Activated T-helper 2 cell treated with anti-CD3 and anti-CD28 coated beads, Interferon-gamma antibody, Interleukin-2, Interleukin-4, amounts not matched to agents 10 μg/mL and 5 μg/mL and 100 μg/mL, durations not matched to agents 14 hours and 24 hours and 36 hours (primary cell): ENCODE measurements at regions of chr20 and their contacts with region 1.

Region 1: GRCh38 chr20:37384683-37385174 is 38.8 kb downstream of the SRC start:
- DNase-seq: peak; percentile 72
- H3K4me3 Mint-ChIP-seq: peak overlapping the region; percentile 79
- H3K27ac Mint-ChIP-seq: no peak overlapping the region
- H3K4me1 Mint-ChIP-seq: peaks cover 5% of the 10 kb centered on the region
- H3K27me3 Mint-ChIP-seq: peaks cover 3% of the 10 kb centered on the region

Region 2: DNA sequence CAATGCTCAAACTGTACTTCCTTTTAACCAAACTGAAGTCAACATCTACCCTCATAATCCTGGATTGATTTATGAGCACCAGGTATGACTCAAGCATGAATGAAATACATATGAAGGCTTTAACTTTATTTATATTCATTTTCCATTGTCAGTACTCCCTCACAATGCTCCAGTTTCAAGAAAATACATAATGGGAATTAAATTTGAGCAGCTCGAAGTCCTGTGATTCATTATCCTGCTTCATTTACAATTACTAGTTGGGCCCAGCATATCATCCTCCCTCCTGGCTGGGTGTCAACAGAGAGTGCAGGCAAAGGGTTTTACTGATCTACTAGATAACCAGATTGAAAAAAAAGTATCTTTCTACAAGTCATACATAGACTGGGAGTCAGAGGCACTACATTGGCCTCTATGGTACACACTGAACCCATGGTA is 443.3 kb before region 1 on chr20:
- intact Hi-C with region 1: no loop called
- DNase-seq: no peak
- H3K4me3 Mint-ChIP-seq: no peak overlapping the region
- H3K27ac Mint-ChIP-seq: peak overlapping the region; percentile 88
- H3K4me1 Mint-ChIP-seq: peaks cover 46% of the 10 kb centered on the region
- H3K27me3 Mint-ChIP-seq: no peaks in the 10 kb centered on the region

Region 3: GRCh38 chr20:36988494-36988966 is 396.2 kb before region 1 on chr20:
- intact Hi-C with region 1: no loop called
- DNase-seq: no peak
- H3K4me3 Mint-ChIP-seq: no peak overlapping the region
- H3K27ac Mint-ChIP-seq: no peak overlapping the region
- H3K4me1 Mint-ChIP-seq: peaks cover 11% of the 10 kb centered on the region
- H3K27me3 Mint-ChIP-seq: no peaks in the 10 kb centered on the region

Region 4: DNA sequence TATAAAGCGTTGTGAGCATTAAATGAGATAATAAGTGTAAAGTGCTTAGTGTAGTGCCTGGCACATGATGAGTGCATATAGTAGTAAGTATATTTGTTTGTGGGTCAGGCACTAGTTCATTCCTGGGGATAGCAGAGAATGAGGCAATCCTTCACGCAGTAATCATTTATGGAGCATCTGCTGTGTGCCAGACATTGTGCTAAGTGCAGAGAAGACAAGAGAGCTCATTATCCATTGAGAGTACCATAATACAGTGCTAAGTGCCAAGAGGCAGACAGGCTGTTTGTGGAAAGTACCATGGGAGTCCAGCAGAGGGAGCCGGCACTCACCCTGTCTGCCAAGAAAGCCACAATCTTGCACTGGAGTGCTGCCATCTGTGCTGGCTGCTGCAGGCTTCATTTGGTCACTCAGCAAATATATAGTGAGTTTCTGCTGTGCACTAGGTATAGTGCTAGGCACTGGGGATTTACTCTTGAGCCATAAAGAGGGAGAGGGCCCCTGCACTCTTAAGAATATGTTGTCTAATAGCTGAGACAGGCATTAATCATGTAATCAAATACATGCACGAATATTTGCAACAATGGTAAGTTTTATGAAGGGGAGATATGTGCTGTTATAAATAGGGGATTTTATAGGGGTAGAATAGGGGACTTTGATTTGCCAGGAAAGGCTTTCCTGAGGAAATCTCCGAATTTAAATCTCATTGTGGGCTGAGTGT is 192.4 kb before region 1 on chr20:
- intact Hi-C with region 1: loop called (anchors 10 kb)
- DNase-seq: peak; percentile 61
- H3K4me3 Mint-ChIP-seq: no peak overlapping the region
- H3K27ac Mint-ChIP-seq: peak overlapping the region; percentile 57
- H3K4me1 Mint-ChIP-seq: peaks cover 59% of the 10 kb centered on the region
- H3K27me3 Mint-ChIP-seq: no peaks in the 10 kb centered on the region

Region 5: GRCh38 chr20:37270576-37271420 is 113.9 kb before region 1 on chr20:
- intact Hi-C with region 1: loop called (anchors 1 kb)
- DNase-seq: no peak
- H3K4me3 Mint-ChIP-seq: no peak overlapping the region
- H3K27ac Mint-ChIP-seq: no peak overlapping the region
- H3K4me1 Mint-ChIP-seq: no peaks in the 10 kb centered on the region
- H3K27me3 Mint-ChIP-seq: peaks cover 6% of the 10 kb centered on the region

Region 6: GRCh38 chr20:37288091-37288490 is 96.6 kb before region 1 on chr20:
- intact Hi-C with region 1: loop called (anchors 5 kb)
- DNase-seq: no peak
- H3K4me3 Mint-ChIP-seq: peak overlapping the region; percentile 53
- H3K27ac Mint-ChIP-seq: peak overlapping the region; percentile 51
- H3K4me1 Mint-ChIP-seq: peaks cover 15% of the 10 kb centered on the region
- H3K27me3 Mint-ChIP-seq: peaks cover 9% of the 10 kb centered on the region

Region 7: GRCh38 chr20:37463726-37464494 is 79.2 kb after region 1 on chr20:
- intact Hi-C with region 1: no loop called
- DNase-seq: no peak
- H3K4me3 Mint-ChIP-seq: no peak overlapping the region
- H3K27ac Mint-ChIP-seq: no peak overlapping the region
- H3K4me1 Mint-ChIP-seq: peaks cover 5% of the 10 kb centered on the region
- H3K27me3 Mint-ChIP-seq: peaks cover 7% of the 10 kb centered on the region